Activated naive CD8-positive, alpha-beta T cell treated with anti-CD3 and anti-CD28 coated beads, Interleukin-2, amount 10 ng/mL, durations not matched to agents 7 days and 5 days (primary cell): ENCODE measurements at regions of chr14 and their contacts with region 1.

Region 1: DNA sequence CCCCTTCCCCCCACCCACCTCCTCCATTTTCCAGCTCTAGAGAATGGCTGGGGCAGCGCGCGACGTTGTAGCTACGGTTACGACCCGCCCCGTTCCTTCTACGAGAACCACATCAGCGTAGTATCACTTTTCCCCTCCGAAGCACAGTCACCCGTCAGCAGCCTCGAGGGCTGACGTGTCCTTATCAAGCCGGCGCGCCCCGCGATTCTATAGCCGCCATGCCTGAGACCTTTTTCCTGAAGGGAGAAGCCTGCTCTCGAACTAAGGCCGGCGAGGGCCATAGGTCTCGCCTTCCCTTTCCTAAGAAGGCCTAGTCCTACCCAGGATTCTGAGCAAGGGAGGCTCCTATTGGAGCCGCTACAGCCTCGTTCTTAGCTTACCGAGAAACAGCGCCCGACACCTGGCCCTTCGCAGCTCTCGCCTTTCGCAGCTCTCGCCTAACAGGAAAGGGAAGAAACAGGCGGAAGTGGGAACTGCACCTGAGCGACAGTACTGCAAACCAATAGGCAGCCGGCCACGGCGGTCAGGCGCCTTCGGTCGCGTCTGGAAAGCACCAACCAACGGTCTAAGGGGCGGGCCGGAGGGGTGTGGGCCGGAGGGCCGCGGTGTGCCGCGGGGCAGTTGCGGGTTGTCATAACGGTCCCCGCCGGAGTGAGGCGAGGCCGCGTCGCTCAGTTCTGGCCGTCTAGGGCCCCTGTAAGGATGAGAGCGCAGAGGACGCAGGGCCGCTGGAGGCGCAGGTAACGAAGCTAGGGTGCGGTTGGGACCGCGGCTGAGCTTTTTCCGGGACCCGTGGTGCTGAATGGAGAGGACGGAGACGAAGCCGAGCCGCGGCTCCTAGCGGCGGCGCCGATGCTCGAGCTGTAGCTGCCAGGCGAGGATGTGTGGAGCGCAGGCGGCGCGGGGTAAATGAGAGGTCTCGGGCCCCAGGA is at the starts of genes MGAT2 and RPL36AL:
- DNase-seq: peak; percentile 95
- ATAC-seq: peak; percentile 91
- H3K4me3 Mint-ChIP-seq: peak within 1 kb of the TSS; percentile 97
- H3K27ac Mint-ChIP-seq: peak within 1 kb of the TSS; percentile 94
- H3K4me1 Mint-ChIP-seq: peaks cover 34% of the 10 kb centered on the region
- H3K27me3 Mint-ChIP-seq: no peaks in the 10 kb centered on the region
- total RNA-seq, gene MGAT2: 54.6 to 55.0 TPM
- total RNA-seq, gene RPL36AL: 238 to 254 TPM

Region 2: GRCh38 chr14:49585803-49586672 is 34.4 kb before region 1 on chr14 and contains the start of gene RPS29:
- POLR2A ChIA-PET with region 1: interaction called, 57 read pairs
- DNase-seq: peak; percentile 98
- ATAC-seq: peak; percentile 89
- H3K4me3 Mint-ChIP-seq: peak within 1 kb of the TSS; percentile 94
- H3K27ac Mint-ChIP-seq: peak within 1 kb of the TSS; percentile 99
- H3K4me1 Mint-ChIP-seq: peaks cover 42% of the 10 kb centered on the region
- H3K27me3 Mint-ChIP-seq: no peaks in the 10 kb centered on the region
- total RNA-seq, gene RPS29: 1,762 to 1,786 TPM

Region 3: DNA sequence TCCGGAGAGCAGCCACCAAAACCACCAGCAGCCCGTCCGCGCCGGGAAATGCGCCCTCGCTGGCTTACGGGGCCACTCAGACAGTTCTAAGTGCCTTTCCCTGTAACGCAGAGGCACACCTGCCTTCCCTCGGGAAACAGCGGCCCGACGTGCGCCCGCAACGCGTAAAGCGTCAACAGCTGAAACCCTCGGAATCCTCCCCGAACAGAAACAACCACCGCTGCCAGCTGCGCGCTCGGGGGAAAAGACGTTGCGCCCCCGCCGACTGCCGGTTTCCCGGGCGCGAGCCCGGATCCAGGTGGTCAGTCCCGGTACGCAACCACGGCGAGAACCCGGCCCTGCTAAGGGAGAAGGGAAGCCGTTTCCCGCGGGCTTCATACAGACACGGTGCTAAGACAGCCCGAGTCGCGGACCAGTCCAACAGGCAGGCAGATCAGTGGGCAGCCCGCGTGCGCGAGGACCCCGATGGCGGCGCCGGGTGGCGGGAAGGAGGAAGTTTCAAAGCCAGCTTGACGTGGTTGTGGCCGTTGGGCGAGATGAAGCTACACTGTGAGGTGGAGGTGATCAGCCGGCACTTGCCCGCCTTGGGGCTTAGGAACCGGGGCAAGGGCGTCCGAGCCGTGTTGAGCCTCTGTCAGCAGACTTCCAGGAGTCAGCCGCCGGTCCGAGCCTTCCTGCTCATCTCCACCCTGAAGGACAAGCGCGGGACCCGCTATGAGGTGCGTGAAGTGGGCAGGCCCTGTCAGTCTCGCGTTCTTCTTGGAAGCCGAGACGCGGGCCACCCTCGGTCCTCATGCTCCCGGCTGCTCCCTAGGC is 21.8 kb before region 1 on chr14 and contains the start of gene LRR1:
- POLR2A ChIA-PET with region 1: interaction called, 52 read pairs
- DNase-seq: peak; percentile 94
- ATAC-seq: peak; percentile 83
- H3K4me3 Mint-ChIP-seq: peak within 1 kb of the TSS; percentile 95
- H3K27ac Mint-ChIP-seq: peak within 1 kb of the TSS; percentile 97
- H3K4me1 Mint-ChIP-seq: peaks cover 28% of the 10 kb centered on the region
- H3K27me3 Mint-ChIP-seq: peaks cover 2% of the 10 kb centered on the region
- total RNA-seq, gene LRR1: 43.7 to 44.3 TPM

Region 4: GRCh38 chr14:49633640-49634546 is 13.4 kb after region 1 on chr14:
- POLR2A ChIA-PET with region 1: interaction called, 102 read pairs
- DNase-seq: peak; percentile 94
- ATAC-seq: peak; percentile 85
- H3K4me3 Mint-ChIP-seq: peak overlapping the region; percentile 99
- H3K27ac Mint-ChIP-seq: peak overlapping the region; percentile 90
- H3K4me1 Mint-ChIP-seq: peaks cover 32% of the 10 kb centered on the region
- H3K27me3 Mint-ChIP-seq: no peaks in the 10 kb centered on the region

Region 5: DNA sequence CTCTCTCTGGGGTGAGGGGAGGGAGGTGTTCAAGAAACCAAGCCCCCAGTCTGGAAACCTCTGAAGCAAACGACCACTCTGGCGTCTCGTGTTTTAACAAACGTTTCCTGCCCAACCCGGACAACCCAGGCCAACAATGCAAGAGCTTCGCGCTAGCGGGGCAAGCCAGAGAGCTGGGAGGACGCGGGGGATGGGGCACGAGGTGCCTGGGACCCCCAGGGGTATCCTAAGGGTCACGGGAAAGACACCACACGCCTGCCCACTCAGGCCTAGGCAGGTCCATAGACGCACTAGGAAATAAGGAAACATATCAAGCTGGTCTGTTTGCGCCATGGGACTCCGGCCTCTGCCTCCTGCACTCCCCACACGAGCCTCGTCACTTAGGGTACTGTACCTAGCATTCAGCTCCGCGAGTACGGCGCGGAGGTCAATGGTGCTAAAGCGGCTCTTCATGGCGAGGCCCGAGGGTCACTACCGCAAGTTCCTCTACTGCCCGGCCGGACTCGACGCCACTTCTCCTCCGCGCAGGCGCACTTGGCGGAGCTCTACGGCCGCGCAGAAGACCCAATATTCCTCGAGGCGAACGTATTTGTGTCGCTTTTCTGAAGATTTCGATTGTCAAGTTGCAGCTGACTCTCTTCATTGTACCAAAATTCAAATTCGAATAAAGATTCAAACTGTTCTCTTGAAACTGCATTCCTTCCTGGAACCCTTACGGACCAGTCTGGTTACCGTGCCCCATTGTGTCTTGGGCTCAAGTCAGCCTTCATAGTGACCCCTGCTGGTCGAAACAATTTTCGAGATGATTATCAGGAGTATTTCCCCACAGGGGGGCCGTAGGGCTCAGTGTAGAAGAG is 232.1 kb after region 1 on chr14 and contains the start of gene NEMF:
- POLR2A ChIA-PET with region 1: interaction called, 17 read pairs
- DNase-seq: peak; percentile 81
- ATAC-seq: peak; percentile 80
- H3K4me3 Mint-ChIP-seq: peak within 1 kb of the TSS; percentile 99
- H3K27ac Mint-ChIP-seq: peak within 1 kb of the TSS; percentile 99
- H3K4me1 Mint-ChIP-seq: peaks cover 29% of the 10 kb centered on the region
- H3K27me3 Mint-ChIP-seq: no peaks in the 10 kb centered on the region
- total RNA-seq, gene NEMF: 90.1 to 91.1 TPM

Region 6: DNA sequence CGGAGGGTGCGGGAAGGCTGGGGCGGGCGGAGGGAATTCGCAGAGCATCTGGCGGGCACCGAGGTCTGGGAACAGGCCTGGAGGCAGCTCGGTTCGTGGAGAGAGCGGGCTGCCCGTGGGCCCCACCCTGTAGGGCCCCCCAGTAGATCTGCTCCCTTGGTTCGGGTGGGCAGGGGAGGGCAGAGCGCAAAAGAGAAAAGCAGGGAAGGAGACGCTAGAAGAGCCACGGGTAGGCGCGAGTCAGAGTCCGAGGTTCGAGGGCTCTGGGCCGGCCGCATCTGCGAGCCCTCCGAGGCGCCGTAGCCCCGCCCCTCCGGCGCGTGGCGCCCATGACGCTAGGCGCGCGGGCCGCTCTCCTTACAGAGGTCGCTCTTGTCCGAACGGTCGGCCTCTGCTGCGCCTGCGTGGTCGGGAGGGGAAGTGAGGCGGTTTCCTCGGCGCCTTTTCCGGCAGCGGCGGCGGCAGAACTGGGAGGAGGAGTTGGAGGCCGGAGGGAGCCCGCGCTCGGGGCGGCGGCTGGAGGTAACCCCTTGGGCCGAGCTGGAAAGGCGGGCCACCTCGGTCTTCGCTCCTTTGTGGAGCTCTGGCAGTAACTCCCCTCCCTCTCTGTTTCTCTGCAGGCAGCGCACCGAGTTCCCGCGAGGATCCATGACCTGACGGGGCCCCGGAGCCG is 272.3 kb after region 1 on chr14 and contains the start of gene ARF6:
- POLR2A ChIA-PET with region 1: no interaction called
- DNase-seq: peak; percentile 98
- ATAC-seq: peak; percentile 89
- H3K4me3 Mint-ChIP-seq: peak within 1 kb of the TSS; percentile 99
- H3K27ac Mint-ChIP-seq: peak within 1 kb of the TSS; percentile 99
- H3K4me1 Mint-ChIP-seq: peaks cover 16% of the 10 kb centered on the region
- H3K27me3 Mint-ChIP-seq: no peaks in the 10 kb centered on the region
- total RNA-seq, gene ARF6: 162 to 169 TPM